ENCODE measurements at regions of chr12 and their contacts with region 1.

Region 1: GRCh38 chr12:89524541-89525285 is at the start of gene GALNT4:
- DNase-seq: peak; percentile 84 to 91
- ATAC-seq: peak; percentile 90 to 92 (median 92)
- H3K4me3 ChIP-seq: peak within 1 kb of the TSS; percentile 88
- H3K27ac ChIP-seq: peak within 1 kb of the TSS; percentile 89
- H3K4me1 ChIP-seq: peaks cover 22% of the 10 kb centered on the region
- H3K27me3 ChIP-seq: no peaks in the 10 kb centered on the region
- CTCF ChIP-seq: peak; percentile 62
- total RNA-seq, gene GALNT4: 1.2 to 1.6 (median 1.3) TPM

Region 2: GRCh38 chr12:88141770-88142609 is 1382.7 kb before region 1 on chr12 and contains the starts of genes CEP290 and TMTC3:
- intact Hi-C with region 1: loop called in 1 of 2 experiments (anchors 10 kb)
- DNase-seq: peak; percentile 91 to 95
- ATAC-seq: peak; percentile 98 to 99 (median 98)
- H3K4me3 ChIP-seq: peak within 1 kb of the TSS; percentile 88
- H3K27ac ChIP-seq: peak within 1 kb of the TSS; percentile 78
- H3K4me1 ChIP-seq: peaks cover 13% of the 10 kb centered on the region
- H3K27me3 ChIP-seq: no peaks in the 10 kb centered on the region
- CTCF ChIP-seq: no peak
- total RNA-seq, gene CEP290: 3.2 to 7.2 (median 5.0) TPM
- total RNA-seq, gene TMTC3: 5.5 to 8.5 (median 7.0) TPM

Region 3: GRCh38 chr12:89019408-89020120 is 505.1 kb before region 1 on chr12:
- intact Hi-C with region 1: loop called (anchors 2 to 5 kb)
- DNase-seq: peak; percentile 51 to 60
- ATAC-seq: peak; percentile 88 to 99 (median 91)
- H3K4me3 ChIP-seq: peak overlapping the region; percentile 40
- H3K27ac ChIP-seq: no peak overlapping the region
- H3K4me1 ChIP-seq: no peaks in the 10 kb centered on the region
- H3K27me3 ChIP-seq: no peaks in the 10 kb centered on the region
- CTCF ChIP-seq: peak; percentile 81

Region 4: GRCh38 chr12:89040146-89040964 is 484.4 kb before region 1 on chr12:
- intact Hi-C with region 1: loop called in 1 of 2 experiments (anchors 10 kb)
- DNase-seq: peak in 1 of 2 donors; percentile 24
- ATAC-seq: no peak
- H3K4me3 ChIP-seq: no peak overlapping the region
- H3K27ac ChIP-seq: no peak overlapping the region
- H3K4me1 ChIP-seq: no peaks in the 10 kb centered on the region
- H3K27me3 ChIP-seq: no peaks in the 10 kb centered on the region
- CTCF ChIP-seq: no peak

Region 5: GRCh38 chr12:89352492-89353187 is 172.1 kb before region 1 on chr12 and contains the start of gene DUSP6:
- intact Hi-C with region 1: loop called in 1 of 2 experiments (anchors 5 kb)
- DNase-seq: peak; percentile 90 to 93
- ATAC-seq: peak; percentile 58 to 73 (median 64)
- H3K4me3 ChIP-seq: peak within 1 kb of the TSS; percentile 77
- H3K27ac ChIP-seq: peak within 1 kb of the TSS; percentile 85
- H3K4me1 ChIP-seq: peaks cover 15% of the 10 kb centered on the region
- H3K27me3 ChIP-seq: peaks cover 0 to 95% (median 30%) of the 10 kb centered on the region in 3 donors
- CTCF ChIP-seq: no peak
- total RNA-seq, gene DUSP6: 10.5 to 27.0 (median 13.3) TPM

Region 6: DNA sequence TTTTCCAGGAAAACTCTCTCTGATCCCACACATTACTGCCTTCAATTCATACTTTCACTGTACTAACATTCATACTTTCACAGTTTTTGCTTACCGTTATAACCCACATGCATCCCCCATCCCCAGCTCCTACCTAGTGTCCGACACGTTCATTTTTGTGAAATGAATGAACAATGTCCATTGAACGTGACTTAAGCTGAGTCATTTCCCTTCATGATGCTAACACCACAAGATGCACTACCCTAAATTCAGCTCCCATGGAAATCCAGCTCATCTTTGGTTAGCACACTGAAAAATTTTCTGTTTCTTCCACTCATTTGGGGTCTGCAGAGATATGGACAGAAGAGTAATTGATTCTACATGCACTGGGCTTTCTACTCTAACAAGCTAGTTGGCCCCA is 84.8 kb before region 1 on chr12:
- intact Hi-C with region 1: no loop called
- DNase-seq: no peak
- ATAC-seq: no peak
- H3K4me3 ChIP-seq: no peak overlapping the region
- H3K27ac ChIP-seq: no peak overlapping the region
- H3K4me1 ChIP-seq: no peaks in the 10 kb centered on the region
- H3K27me3 ChIP-seq: no peaks in the 10 kb centered on the region
- CTCF ChIP-seq: no peak

Region 7: GRCh38 chr12:89470741-89471509 is 53.8 kb before region 1 on chr12:
- intact Hi-C with region 1: loop called in 1 of 2 experiments (anchors 2 kb)
- DNase-seq: no peak
- ATAC-seq: peak; percentile 57 to 77 (median 66)
- H3K4me3 ChIP-seq: no peak overlapping the region
- H3K27ac ChIP-seq: no peak overlapping the region
- H3K4me1 ChIP-seq: no peaks in the 10 kb centered on the region
- H3K27me3 ChIP-seq: no peaks in the 10 kb centered on the region
- CTCF ChIP-seq: peak; percentile 60

Region 8: GRCh38 chr12:89556976-89557375 is 32.3 kb after region 1 on chr12:
- intact Hi-C with region 1: no loop called
- DNase-seq: no peak
- ATAC-seq: no peak
- H3K4me3 ChIP-seq: no peak overlapping the region
- H3K27ac ChIP-seq: no peak overlapping the region
- H3K4me1 ChIP-seq: no peaks in the 10 kb centered on the region
- H3K27me3 ChIP-seq: no peaks in the 10 kb centered on the region
- CTCF ChIP-seq: no peak